ENCODE measurements at regions of chr10 and their contacts with region 1.

Region 1: DNA sequence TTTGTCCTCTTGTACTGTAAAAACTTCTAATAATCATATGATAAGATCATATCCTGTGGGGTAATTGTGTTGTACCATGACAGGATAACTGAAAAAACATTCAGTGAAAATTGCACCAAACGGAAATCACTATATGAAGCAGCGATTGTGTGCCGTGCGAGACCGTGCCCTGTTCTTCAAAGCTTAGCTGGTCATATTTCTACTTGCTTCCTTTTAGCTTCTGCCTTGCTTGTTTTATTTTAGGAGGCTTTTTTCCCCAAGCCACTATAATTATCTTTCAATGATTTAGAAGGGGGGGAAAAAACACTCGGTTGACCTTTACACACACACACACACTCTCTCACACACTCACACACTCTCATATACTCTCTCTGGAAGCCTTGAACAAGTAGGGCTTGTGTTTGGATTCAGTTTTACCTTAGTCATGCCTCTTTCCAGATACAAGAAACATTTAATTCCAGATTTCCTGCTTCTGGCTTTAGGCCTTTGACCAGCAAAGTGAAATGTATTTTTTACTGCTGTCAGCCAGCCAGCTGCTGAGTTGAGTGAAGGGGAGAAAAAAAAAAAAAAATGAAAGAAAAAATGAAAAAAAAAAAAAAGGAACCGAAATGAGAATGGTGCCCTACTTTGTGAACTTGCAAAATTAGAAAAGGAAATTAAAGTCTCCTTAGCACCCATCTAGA is 181.4 kb downstream of the ARID5B start:
- DNase-seq: peak; percentile 94
- H3K4me3 ChIP-seq: peak overlapping the region in 1 of 3 experiments; percentile 43
- H3K27ac ChIP-seq: peak overlapping the region; percentile 100
- H3K4me1 ChIP-seq: peaks cover 37% of the 10 kb centered on the region
- H3K27me3 ChIP-seq: no peaks in the 10 kb centered on the region
- CTCF ChIP-seq: no peak
- POLR2A ChIP-seq: peak; percentile 60

Region 2: GRCh38 chr10:60827791-60828488 is 1254.9 kb before region 1 on chr10:
- CTCF ChIA-PET with region 1: no interaction called
- POLR2A ChIA-PET with region 1: no interaction called
- dilution Hi-C with region 1: no loop called
- intact Hi-C with region 1: loop called (anchors 2 kb)
- DNase-seq: peak; percentile 98
- H3K4me3 ChIP-seq: peak overlapping the region in 1 of 3 experiments; percentile 39
- H3K27ac ChIP-seq: peak overlapping the region; percentile 98
- H3K4me1 ChIP-seq: peaks cover 32% of the 10 kb centered on the region
- H3K27me3 ChIP-seq: no peaks in the 10 kb centered on the region
- CTCF ChIP-seq: no peak
- POLR2A ChIP-seq: no peak

Region 3: GRCh38 chr10:62121187-62121530 is 38.3 kb after region 1 on chr10:
- CTCF ChIA-PET with region 1: no interaction called
- POLR2A ChIA-PET with region 1: no interaction called
- dilution Hi-C with region 1: no loop called
- intact Hi-C with region 1: loop called (anchors 1 kb)
- DNase-seq: peak; percentile 64
- H3K4me3 ChIP-seq: peak overlapping the region in 1 of 3 experiments; percentile 10
- H3K27ac ChIP-seq: peak overlapping the region; percentile 86
- H3K4me1 ChIP-seq: peaks cover 24% of the 10 kb centered on the region
- H3K27me3 ChIP-seq: no peaks in the 10 kb centered on the region
- CTCF ChIP-seq: no peak
- POLR2A ChIP-seq: no peak

Region 4: GRCh38 chr10:62171791-62172190 is 88.9 kb after region 1 on chr10:
- CTCF ChIA-PET with region 1: no interaction called
- POLR2A ChIA-PET with region 1: no interaction called
- dilution Hi-C with region 1: no loop called
- intact Hi-C with region 1: loop called (anchors 2 kb)
- DNase-seq: peak; percentile 80
- H3K4me3 ChIP-seq: no peak overlapping the region
- H3K27ac ChIP-seq: no peak overlapping the region
- H3K4me1 ChIP-seq: no peaks in the 10 kb centered on the region
- H3K27me3 ChIP-seq: no peaks in the 10 kb centered on the region
- CTCF ChIP-seq: no peak
- POLR2A ChIP-seq: no peak

Region 5: GRCh38 chr10:62244780-62245467 is 162.1 kb after region 1 on chr10:
- CTCF ChIA-PET with region 1: interaction called, 13 read pairs
- POLR2A ChIA-PET with region 1: interaction called, 3 read pairs
- dilution Hi-C with region 1: no loop called
- intact Hi-C with region 1: loop called (anchors 1 kb)
- DNase-seq: peak; percentile 86
- H3K4me3 ChIP-seq: no peak overlapping the region
- H3K27ac ChIP-seq: no peak overlapping the region
- H3K4me1 ChIP-seq: peaks cover 17% of the 10 kb centered on the region
- H3K27me3 ChIP-seq: no peaks in the 10 kb centered on the region
- CTCF ChIP-seq: peak; percentile 63 to 71
- POLR2A ChIP-seq: no peak